Activated CD4-positive, alpha-beta memory T cell treated with anti-CD3 and anti-CD28 coated beads for 36 hours (primary cell): ENCODE measurements at regions of chr6 and their contacts with region 1.

Region 1: GRCh38 chr6:139161817-139162284 is 27.0 kb downstream of the HECA start:
- DNase-seq: peak; percentile 88
- H3K4me3 Mint-ChIP-seq: peak overlapping the region; percentile 61
- H3K27ac Mint-ChIP-seq: peak overlapping the region; percentile 96
- H3K4me1 Mint-ChIP-seq: peaks cover 92% of the 10 kb centered on the region
- H3K27me3 Mint-ChIP-seq: no peaks in the 10 kb centered on the region

Region 2: DNA sequence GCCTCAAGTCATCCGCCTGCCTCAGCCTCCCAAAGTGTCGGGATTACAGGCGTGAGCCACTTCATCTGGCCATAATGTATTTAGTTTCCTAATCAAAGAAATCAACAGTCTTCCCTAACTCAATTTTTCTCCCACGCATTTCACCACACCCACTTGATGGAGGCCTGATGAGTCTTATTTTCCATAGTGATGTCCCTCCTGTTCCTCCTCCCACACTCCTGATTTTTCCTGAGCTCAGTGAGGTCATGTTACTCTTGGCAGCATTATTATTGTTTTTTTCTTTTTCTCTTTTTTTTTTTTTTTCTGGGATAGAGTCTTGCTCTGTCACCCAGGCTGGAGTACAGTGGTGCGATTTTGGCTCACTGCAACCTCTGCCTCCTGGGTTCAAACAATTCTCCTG is 124.4 kb before region 1 on chr6:
- CTCF ChIA-PET with region 1: no interaction called
- POLR2A ChIA-PET with region 1: no interaction called
- intact Hi-C with region 1: no loop called
- DNase-seq: no peak
- H3K4me3 Mint-ChIP-seq: no peak overlapping the region
- H3K27ac Mint-ChIP-seq: peak overlapping the region; percentile 43
- H3K4me1 Mint-ChIP-seq: peaks cover 30% of the 10 kb centered on the region
- H3K27me3 Mint-ChIP-seq: no peaks in the 10 kb centered on the region

Region 3: DNA sequence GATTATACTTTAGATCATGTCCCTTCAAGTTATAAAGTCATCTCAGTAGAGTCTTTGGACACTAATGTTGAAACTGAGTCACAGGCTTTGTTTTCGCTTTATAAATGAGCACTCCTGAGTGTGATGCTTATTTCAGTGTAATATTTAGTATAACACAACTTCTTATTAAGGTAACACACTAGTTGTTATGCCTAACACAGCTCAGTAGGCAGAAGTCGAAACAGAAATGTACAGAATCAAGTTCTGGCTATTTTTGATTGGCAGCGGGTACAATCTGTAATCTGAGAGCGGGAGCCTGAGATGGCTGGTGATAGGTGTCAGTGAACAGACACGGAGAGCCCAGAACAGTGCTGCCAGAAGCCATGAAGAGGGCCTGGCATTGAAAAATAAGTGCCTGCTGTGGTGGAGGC is 15.5 kb before region 1 on chr6:
- CTCF ChIA-PET with region 1: interaction called, 7 read pairs
- POLR2A ChIA-PET with region 1: interaction called, 48 read pairs
- intact Hi-C with region 1: loop called (anchors 1 kb)
- DNase-seq: peak; percentile 59
- H3K4me3 Mint-ChIP-seq: peak overlapping the region; percentile 72
- H3K27ac Mint-ChIP-seq: peak overlapping the region; percentile 99
- H3K4me1 Mint-ChIP-seq: peaks cover 94% of the 10 kb centered on the region
- H3K27me3 Mint-ChIP-seq: no peaks in the 10 kb centered on the region